IMR-90 (cell line): ENCODE measurements at regions of chr3 and their contacts with region 1.

Region 1: DNA sequence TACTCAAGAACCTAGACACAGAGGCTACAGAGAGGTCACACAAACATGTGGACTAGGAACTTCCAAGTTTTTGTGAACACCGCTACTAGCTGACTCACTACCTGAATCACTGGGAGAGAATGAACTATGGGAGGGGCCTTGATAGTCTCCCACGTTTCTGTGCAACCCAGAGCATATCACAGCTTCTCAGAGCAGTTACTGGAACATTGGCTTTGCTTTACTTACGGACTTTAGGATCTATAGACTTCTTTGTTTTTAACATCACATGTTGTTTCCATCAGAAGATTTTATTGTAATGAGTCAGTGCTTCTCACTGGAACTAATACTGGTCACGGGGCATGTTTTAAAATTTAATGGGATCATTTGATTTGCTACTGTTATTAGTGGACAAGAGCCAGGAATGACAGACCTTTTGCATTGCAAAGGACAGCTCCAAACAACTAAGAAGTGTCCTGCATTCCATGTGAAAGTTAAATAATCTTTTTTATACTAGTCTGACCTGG is 35.6 kb downstream of the RTP4 start:
- DNase-seq: peak; percentile 97
- ATAC-seq: peak; percentile 96
- H3K4me3 ChIP-seq: no peak overlapping the region
- H3K27ac ChIP-seq: peak overlapping the region; percentile 27; the same call in 1 of the 2 replicates
- H3K4me1 ChIP-seq: peaks cover 3% of the 10 kb centered on the region
- H3K27me3 ChIP-seq: peaks cover 2% of the 10 kb centered on the region; the same call in 1 of the 2 replicates
- CTCF ChIP-seq: no peak
- POLR2A ChIP-seq: no peak
- RAD21 ChIP-seq: no peak

Region 2: DNA sequence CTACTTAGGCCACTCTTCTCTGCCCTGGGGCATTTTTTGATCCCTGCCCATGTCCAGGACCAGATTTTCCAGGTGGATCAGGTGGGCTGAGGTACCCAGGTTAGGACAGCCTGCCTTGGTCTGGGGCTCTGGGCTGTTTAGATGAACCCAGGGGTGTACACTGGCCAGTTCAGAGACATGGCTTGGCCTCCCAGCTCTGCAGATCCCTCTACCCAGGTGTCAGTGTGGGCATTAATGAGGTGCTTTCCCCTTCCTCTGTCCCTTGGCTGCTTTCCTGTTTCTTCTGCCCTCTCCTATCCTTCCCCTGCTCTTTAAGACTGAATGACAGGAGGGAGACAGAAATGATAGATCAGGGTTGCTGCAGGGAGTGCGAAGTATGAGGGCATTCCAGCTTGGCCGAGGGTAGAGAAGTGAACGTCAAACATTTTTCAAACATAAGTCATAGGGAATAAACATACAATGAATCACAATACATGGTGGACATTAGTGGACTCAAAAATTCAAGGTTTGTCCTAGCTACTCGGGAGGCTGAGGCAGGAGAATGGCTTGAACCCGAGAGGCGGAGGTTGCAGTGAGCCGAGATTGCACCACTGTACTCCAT is 176.1 kb before region 1 on chr3:
- CTCF ChIA-PET with region 1: no interaction called
- POLR2A ChIA-PET with region 1: no interaction called
- dilution Hi-C with region 1: no loop called
- in situ Hi-C with region 1: no loop called
- intact Hi-C with region 1: loop called (anchors 10 kb)
- DNase-seq: peak; percentile 86
- ATAC-seq: peak; percentile 84
- H3K4me3 ChIP-seq: no peak overlapping the region
- H3K27ac ChIP-seq: peak overlapping the region; percentile 8; the same call in 1 of the 2 replicates
- H3K4me1 ChIP-seq: peaks cover 17% of the 10 kb centered on the region
- H3K27me3 ChIP-seq: no peaks in the 10 kb centered on the region
- CTCF ChIP-seq: no peak
- POLR2A ChIP-seq: no peak
- RAD21 ChIP-seq: no peak

Region 3: DNA sequence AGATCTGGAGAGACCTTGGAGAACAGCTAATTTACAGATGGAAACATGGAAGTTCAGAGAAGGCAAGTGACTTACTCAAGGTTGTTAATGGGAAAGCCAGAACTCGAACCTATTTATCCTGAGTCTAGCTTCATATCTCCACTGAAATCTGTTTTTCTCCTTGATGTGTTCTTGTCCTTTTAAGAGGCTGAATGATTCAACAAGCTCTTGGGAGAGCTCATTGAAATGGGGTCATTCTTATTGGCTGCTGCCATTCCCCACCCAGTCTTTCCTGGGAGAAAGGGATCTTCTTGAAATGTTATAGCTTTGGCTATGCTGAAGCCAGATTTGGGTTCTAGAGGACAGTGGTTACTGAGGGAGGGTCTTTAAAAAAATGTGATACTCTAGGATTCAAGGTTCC is 165.6 kb before region 1 on chr3:
- CTCF ChIA-PET with region 1: no interaction called
- POLR2A ChIA-PET with region 1: no interaction called
- dilution Hi-C with region 1: no loop called
- in situ Hi-C with region 1: no loop called
- intact Hi-C with region 1: no loop called
- DNase-seq: no peak
- ATAC-seq: no peak
- H3K4me3 ChIP-seq: no peak overlapping the region
- H3K27ac ChIP-seq: no peak overlapping the region
- H3K4me1 ChIP-seq: 0 out of 2 replicates have a peak, but pooled peaks cover 3% of the 10 kb centered on the region
- H3K27me3 ChIP-seq: no peaks in the 10 kb centered on the region
- CTCF ChIP-seq: no peak
- POLR2A ChIP-seq: no peak
- RAD21 ChIP-seq: no peak

Region 4: DNA sequence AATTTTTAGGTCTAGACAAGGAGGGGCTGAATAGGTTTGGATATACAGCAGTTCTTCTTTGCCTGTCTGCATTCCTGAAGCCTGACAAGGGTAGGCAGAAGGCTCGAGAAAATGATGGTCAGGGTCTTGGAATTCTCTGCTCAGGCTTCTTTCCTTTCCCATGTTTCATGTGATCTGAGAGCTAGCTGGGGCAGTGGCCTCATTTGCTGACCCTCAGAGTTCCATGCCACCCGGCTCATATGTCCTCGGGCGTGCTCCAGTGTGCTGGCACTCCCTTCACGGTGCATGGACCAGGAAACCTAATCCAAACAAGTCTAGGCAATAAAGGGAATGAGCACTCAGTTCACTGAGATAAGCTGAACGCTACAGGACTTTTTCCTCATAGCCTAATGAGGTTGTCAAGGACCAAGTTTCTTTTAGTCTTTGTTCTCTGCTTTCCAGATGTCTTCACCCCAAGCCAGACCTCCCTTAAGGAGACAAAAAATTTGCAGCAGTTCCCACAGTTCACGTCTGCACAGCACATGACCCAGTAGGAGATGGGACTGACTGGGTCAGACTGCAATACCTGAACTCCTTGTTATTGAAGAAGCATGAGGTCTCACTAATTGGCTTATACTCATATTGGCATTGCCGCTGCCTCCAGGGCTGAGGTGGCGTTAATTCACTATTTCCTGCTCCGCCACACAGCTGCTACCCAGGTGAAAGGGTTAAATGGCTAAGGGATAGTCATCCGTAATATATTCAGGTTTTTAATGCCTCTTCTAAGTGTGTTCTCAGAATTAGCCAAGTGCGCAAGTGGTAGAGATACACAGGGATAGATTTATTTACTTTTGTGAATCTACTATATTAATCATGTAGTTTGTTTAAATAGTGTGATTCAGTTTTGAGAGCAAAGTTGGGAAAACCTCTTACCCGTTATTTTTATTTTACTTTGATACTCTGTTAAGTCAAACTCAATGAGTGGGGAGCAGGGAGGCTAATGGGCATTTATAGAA is 50.9 kb before region 1 on chr3:
- CTCF ChIA-PET with region 1: no interaction called
- POLR2A ChIA-PET with region 1: no interaction called
- dilution Hi-C with region 1: no loop called
- in situ Hi-C with region 1: no loop called
- intact Hi-C with region 1: loop called (anchors 2 kb)
- DNase-seq: peak; percentile 7
- ATAC-seq: peak; percentile 46
- H3K4me3 ChIP-seq: no peak overlapping the region
- H3K27ac ChIP-seq: no peak overlapping the region
- H3K4me1 ChIP-seq: peaks cover 4% of the 10 kb centered on the region; the same call in 1 of the 2 replicates
- H3K27me3 ChIP-seq: peaks cover 7% of the 10 kb centered on the region
- CTCF ChIP-seq: no peak
- POLR2A ChIP-seq: no peak
- RAD21 ChIP-seq: no peak

Region 5: DNA sequence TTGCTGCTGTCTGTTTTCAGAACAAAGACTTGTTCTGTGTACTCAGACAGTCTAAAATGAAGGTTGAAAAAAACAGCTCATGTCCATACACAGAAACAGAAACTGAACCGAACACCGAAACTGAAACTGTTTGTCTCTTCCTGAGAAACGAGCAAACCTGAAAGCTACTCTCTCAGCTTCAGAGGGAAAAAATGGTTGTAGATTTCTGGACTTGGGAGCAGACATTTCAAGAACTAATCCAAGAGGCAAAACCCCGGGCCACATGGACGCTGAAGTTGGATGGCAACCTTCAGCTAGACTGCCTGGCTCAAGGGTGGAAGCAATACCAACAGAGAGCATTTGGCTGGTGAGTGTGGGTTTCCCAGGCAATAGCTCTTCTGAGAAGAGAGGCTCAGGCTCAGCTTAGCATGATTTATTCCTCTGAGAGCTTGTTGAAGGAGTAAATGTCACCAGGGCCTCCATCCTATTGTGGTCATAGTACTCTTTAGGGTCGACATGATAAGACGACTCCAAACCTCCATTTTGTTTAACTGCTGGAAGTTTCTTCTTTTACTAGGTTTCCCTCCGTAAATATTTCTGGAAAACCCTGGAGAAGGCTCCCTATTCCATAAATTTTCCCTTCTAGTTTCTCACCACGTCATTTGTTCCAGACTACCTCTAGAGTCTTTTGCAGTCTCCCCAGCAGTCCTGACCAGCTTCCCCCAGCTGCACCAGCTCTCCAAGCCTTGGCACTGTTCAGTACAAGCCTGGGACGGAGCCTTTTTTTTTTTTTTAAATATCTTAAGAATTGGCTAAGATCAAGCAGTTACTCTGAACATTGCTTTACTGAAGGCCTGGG is 35.3 kb before region 1 on chr3 and contains the start of gene RTP4:
- CTCF ChIA-PET with region 1: no interaction called
- POLR2A ChIA-PET with region 1: no interaction called
- dilution Hi-C with region 1: no loop called
- in situ Hi-C with region 1: no loop called
- intact Hi-C with region 1: no loop called
- DNase-seq: peak; percentile 10
- ATAC-seq: peak; percentile 67
- H3K4me3 ChIP-seq: peak within 1 kb of the TSS; percentile 20; the same call in 1 of the 2 replicates
- H3K27ac ChIP-seq: peak within 1 kb of the TSS; percentile 30; the same call in 1 of the 2 replicates
- H3K4me1 ChIP-seq: no peaks in the 10 kb centered on the region
- H3K27me3 ChIP-seq: peaks cover 5% of the 10 kb centered on the region
- CTCF ChIP-seq: no peak
- POLR2A ChIP-seq: no peak
- RAD21 ChIP-seq: no peak
- total RNA-seq, gene RTP4: not detected in 2 replicates